CD4-positive, alpha-beta memory T cell (primary cell): ENCODE measurements at regions of chr5 and their contacts with region 1.

Region 1: DNA sequence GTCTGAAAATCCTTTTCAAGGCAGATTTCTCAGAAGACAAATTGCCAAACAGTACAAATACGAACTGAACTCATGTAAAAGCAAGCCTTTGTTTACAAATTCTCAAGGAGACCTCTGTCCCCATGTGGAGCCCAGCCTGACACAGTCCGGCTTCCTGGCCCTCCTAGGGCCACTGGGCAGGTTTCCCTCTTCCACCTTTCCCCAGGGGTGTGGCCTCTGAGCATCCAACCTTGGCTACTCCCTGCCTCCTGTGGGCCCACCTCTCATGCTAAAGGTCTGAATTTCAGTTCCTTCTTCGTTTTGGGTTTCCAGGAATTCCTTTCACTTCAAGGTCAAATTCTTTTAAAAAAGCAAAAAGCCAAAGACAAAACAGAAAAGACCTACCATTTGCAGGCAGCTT is 10.1 kb downstream of the DAP start:
- DNase-seq: no peak
- H3K4me3 ChIP-seq: no peak overlapping the region
- H3K4me3 Mint-ChIP-seq: no peak overlapping the region
- H3K27ac ChIP-seq: no peak overlapping the region
- H3K27ac Mint-ChIP-seq: no peak overlapping the region
- H3K4me1 ChIP-seq: no peaks in the 10 kb centered on the region
- H3K4me1 Mint-ChIP-seq: peaks cover 13 to 30% (median 22%) of the 10 kb centered on the region in 4 donors
- H3K27me3 ChIP-seq: no peaks in the 10 kb centered on the region
- H3K27me3 Mint-ChIP-seq: no peaks in the 10 kb centered on the region

Region 2: GRCh38 chr5:10729320-10730042 is 21.4 kb before region 1 on chr5:
- CTCF ChIA-PET with region 1: no interaction called
- POLR2A ChIA-PET with region 1: no interaction called
- intact Hi-C with region 1: loop called (anchors 1 kb)
- DNase-seq: no peak
- H3K4me3 ChIP-seq: no peak overlapping the region
- H3K4me3 Mint-ChIP-seq: no peak overlapping the region
- H3K27ac ChIP-seq: no peak overlapping the region
- H3K27ac Mint-ChIP-seq: peak overlapping the region in 4 of 7 donors; percentile 3 to 43 (median 10)
- H3K4me1 ChIP-seq: peaks cover 4% of the 10 kb centered on the region
- H3K4me1 Mint-ChIP-seq: peaks cover 6 to 21% (median 16%) of the 10 kb centered on the region in 4 donors
- H3K27me3 ChIP-seq: no peaks in the 10 kb centered on the region
- H3K27me3 Mint-ChIP-seq: no peaks in the 10 kb centered on the region